ENCODE measurements at regions of chr18 and their contacts with region 1.

Region 1: GRCh38 chr18:11851146-11851805 is at the start of gene CHMP1B:
- DNase-seq: peak; percentile 95
- H3K4me3 Mint-ChIP-seq: peak within 1 kb of the TSS; percentile 99
- H3K27ac Mint-ChIP-seq: peak within 1 kb of the TSS; percentile 100
- H3K4me1 Mint-ChIP-seq: peaks cover 38% of the 10 kb centered on the region
- H3K27me3 Mint-ChIP-seq: peaks cover 6% of the 10 kb centered on the region
- total RNA-seq, gene CHMP1B: 24.8 and 26.8 TPM in 2 replicates

Region 2: DNA sequence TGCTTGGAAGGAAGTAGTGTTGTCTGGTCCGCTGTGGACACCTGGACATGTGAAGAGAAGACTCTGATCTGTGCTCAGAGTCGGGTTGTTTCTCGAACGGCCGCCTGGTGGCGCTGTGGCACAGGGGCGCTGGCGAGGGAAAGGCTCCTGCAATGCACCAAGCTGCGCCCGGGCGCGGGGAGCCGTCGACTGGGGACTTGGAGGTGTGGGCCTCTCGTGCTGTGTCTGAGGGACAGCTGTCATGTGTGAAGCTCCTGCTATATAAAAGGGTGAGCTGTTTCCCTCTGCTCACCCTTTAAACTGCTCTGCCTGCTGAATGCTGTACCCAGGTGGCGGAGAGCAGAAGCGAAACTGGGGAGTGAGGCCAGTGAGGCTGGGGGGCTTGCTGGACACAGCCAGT is 118.2 kb before region 1 on chr18:
- intact Hi-C with region 1: loop called (anchors 1 kb)
- DNase-seq: peak; percentile 55
- H3K4me3 Mint-ChIP-seq: no peak overlapping the region
- H3K27ac Mint-ChIP-seq: no peak overlapping the region
- H3K4me1 Mint-ChIP-seq: no peaks in the 10 kb centered on the region
- H3K27me3 Mint-ChIP-seq: peaks cover 10% of the 10 kb centered on the region

Region 3: DNA sequence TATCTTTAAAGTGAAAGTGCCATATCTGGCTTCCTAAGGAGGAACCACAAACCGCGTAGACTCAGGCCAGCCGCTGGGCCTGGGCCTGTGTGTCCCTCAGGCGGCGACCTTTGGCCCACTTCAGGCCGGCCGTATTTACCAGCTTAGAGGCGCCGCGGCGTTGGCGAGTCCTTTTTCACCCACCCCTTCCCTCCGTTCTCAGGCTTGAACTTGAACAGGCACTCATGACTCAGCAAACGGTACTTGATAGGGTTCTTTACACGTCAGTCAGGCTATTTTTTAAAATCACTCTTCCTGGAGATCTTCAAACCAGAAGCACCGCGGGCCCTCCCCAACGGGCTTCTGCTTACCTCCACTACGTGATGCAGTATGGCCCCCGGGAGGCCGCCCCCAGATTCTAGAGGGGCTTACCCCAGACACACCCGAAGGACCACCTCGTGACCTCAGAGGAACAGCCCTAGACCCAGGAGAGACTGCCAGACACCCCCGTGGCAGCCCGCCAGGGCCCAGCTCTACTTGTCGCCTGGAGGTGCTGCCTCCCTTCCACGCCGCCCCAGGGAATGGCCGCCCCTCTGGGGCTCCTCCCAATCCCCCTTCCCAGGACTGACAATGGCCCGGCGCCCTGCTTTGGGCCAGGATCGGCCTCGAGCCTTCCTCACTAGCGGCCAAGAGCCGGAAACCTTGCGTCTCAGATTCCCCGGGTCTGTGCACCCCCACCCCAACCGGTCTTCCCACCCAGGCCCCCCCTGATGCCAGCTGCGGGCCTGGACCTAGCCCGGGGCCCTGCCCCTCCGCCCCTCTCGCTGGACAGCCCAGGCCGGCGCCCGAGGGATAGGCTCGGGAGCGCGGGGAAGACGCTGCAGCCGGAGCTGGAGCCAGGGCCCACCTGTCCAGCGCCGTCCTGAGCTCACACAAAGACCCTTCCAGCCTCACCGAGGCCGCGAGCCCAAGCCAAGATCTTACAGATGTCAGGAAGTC is 96.2 kb after region 1 on chr18:
- intact Hi-C with region 1: loop called (anchors 1 kb)
- DNase-seq: peak; percentile 43
- H3K4me3 Mint-ChIP-seq: peak overlapping the region; percentile 70
- H3K27ac Mint-ChIP-seq: peak overlapping the region; percentile 53
- H3K4me1 Mint-ChIP-seq: peaks cover 5% of the 10 kb centered on the region
- H3K27me3 Mint-ChIP-seq: no peaks in the 10 kb centered on the region

Region 4: DNA sequence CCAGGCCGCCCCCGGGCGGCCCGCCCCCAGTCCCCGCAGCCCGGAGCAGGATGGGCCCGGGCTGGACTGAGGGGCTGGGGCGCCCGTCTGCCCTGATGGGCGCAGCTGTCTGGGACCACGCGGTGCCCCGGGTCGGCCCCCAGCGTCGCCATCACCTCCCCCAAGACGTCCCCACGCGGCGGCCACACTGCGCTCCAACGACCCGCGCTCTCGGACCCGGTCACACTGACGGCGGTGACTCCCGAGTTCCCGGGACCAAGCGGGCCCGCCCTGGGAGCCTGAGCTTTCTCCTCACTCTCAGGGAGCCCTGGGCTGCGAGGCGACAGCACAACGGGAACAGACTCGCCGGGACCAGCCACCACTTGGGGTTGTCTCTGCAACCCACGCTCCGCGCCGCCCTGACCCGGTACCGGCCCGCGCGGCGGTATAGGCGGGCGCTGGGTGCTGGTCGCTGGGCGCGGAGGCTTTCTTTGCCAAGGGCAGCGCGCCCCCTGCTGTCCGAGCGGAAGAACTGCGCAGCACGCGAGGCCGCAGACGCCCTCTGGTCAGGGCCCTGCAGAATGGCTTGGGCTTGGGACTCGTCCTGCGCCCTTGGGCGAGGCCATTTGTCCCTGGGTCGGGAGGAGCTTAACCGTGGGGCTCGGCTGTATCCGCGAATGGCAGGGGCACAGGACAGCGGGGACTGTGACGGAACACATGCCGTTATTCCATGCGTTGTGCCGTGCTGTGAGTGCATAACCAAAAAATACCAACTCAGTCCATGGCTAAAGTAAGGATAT is 187.6 kb after region 1 on chr18:
- intact Hi-C with region 1: loop called (anchors 2 kb)
- DNase-seq: peak; percentile 69
- H3K4me3 Mint-ChIP-seq: peak overlapping the region; percentile 69
- H3K27ac Mint-ChIP-seq: no peak overlapping the region
- H3K4me1 Mint-ChIP-seq: peaks cover 19% of the 10 kb centered on the region
- H3K27me3 Mint-ChIP-seq: peaks cover 5% of the 10 kb centered on the region

Region 5: DNA sequence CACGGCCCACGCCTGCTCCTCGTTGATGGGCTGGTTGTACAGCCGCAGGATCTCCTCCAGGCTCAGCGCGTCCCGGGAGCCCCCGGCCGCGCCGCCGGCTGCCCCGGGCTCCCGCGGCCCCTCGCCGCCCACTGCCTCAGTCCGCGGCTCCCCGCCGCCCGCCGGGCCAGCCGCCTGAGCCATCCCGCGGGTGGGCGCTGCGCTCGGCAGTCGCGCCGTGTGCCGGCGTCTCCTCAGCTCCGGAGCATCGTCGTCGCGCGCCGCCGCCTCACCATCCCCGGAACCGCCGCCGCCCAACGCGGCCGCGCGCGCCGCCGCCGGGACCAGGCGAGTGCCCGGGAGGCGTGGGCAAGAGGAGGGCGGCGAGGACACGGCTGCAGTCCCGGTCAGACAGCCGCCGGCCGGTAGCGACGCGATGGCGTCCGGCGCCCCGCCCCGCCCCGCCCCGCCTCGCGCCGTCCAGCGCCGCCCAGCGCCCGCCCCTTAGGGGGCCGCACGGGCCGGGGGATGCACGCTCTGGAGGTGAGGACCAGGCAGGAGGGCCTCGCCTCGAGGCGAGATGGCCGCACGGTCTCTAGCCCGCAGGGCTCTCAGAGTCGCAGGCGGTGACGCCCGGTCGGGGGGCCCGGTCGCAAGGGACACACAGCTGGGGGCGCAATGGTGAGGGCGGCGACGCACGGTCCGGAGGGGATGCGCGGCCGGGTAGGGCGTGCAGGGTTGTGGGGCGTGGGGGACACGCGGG is 806.6 kb after region 1 on chr18 and contains the start of gene SPIRE1:
- intact Hi-C with region 1: loop called (anchors 5 kb)
- DNase-seq: peak; percentile 38
- H3K4me3 Mint-ChIP-seq: peak within 1 kb of the TSS; percentile 84
- H3K27ac Mint-ChIP-seq: peak within 1 kb of the TSS; percentile 47
- H3K4me1 Mint-ChIP-seq: peaks cover 35% of the 10 kb centered on the region
- H3K27me3 Mint-ChIP-seq: peaks cover 27% of the 10 kb centered on the region
- total RNA-seq, gene SPIRE1: 8.8 and 10.9 TPM in 2 replicates

Measured in activated T-helper 1 cell treated with anti-CD3 and anti-CD28 coated beads, Interleukin-12 subunit alpha, Interleukin-12 subunit beta, Interleukin-2, Interleukin-4 antibody, amounts not matched to agents 30 ng/mL and 10 ng/mL and 1 ng/mL, durations not matched to agents 14 hours and 24 hours and 36 hours (primary cell).